ENCODE measurements at regions of chr1 and their contacts with region 1.

Region 1: DNA sequence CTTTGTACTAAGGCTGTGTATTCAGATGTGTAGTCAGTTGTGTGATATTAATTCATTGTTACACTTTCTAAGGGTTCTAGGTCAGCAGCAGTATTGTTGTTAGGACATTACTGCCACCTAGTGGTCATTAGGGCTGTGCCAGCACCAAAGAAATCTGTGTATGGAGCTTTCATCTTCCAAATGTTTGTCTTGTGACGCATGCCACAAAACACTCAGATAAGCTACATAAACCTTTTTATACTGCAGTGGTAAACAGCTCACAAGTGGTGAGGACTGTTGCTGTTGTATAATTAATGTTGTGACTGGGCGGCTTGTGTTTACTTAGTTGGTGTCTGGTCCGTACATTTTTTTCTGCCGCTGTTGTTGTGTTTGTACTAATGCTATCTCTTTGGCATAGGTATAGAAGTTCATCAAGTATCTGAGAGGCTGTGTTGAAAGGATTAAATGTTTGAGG is 51.7 kb downstream of the S1PR1 start:
- DNase-seq: peak; percentile 79
- ATAC-seq: peak; percentile 58
- H3K4me3 Mint-ChIP-seq: no peak overlapping the region
- H3K27ac Mint-ChIP-seq: no peak overlapping the region
- H3K4me1 Mint-ChIP-seq: peaks cover 76% of the 10 kb centered on the region
- H3K27me3 Mint-ChIP-seq: no peaks in the 10 kb centered on the region

Region 2: DNA sequence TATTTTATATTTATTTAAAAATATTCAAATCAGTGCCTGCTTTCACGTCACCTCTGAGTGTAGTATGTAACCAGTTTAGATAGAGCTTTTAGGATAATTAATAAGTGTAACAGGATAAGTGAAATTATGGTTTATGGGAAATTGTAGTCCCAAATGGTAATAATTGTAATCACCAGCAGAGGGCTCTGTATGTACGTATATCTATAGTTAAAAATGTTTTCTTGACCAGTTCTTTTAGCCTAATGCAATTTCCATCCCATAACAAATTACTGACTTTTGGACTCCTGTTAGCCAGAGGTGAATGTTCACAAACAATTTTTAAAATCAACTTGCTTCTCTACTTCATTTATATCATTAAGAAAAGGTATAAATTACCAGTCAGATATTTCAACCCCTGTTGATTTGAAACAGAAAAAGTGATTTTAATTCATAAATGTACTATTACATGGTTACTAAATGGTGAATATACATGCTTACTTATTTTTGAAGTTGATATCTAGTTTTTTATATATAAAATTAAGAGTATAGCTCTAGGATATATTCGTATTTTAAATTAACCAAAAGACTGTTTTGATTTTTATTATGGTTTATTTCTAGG is 367.3 kb before region 1 on chr1:
- CTCF ChIA-PET with region 1: interaction called, 52 read pairs
- POLR2A ChIA-PET with region 1: no interaction called
- DNase-seq: no peak
- ATAC-seq: no peak
- H3K4me3 Mint-ChIP-seq: no peak overlapping the region
- H3K27ac Mint-ChIP-seq: no peak overlapping the region
- H3K4me1 Mint-ChIP-seq: peaks cover 26% of the 10 kb centered on the region
- H3K27me3 Mint-ChIP-seq: no peaks in the 10 kb centered on the region

Region 3: GRCh38 chr1:100950781-100951180 is 337.7 kb before region 1 on chr1:
- CTCF ChIA-PET with region 1: interaction called, 12 read pairs
- POLR2A ChIA-PET with region 1: interaction called, 3 read pairs
- DNase-seq: no peak
- ATAC-seq: no peak
- H3K4me3 Mint-ChIP-seq: no peak overlapping the region
- H3K27ac Mint-ChIP-seq: peak overlapping the region; percentile 40
- H3K4me1 Mint-ChIP-seq: peaks cover 64% of the 10 kb centered on the region
- H3K27me3 Mint-ChIP-seq: no peaks in the 10 kb centered on the region

Region 4: DNA sequence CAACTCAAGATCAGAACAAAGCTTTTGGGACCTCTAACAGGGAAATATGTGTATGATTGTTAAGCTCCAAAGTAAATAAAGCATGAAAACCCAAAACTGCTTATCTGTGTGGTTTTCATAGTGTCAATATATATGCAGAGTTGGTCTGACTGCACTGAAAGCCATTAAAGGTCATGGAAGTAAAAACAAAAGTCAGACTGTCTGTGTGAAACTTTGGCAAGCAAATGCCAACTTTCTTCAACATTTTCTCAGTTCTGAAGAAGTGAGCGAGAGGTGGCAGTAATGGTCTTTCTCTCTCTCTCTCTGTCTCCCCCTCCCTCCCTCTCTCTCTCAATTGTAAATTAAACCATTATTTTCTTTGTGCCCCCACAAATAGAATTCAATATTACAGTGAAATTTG is 151.8 kb before region 1 on chr1:
- CTCF ChIA-PET with region 1: interaction called, 151 read pairs
- POLR2A ChIA-PET with region 1: no interaction called
- DNase-seq: peak; percentile 56
- ATAC-seq: peak; percentile 73
- H3K4me3 Mint-ChIP-seq: peak overlapping the region; percentile 42
- H3K27ac Mint-ChIP-seq: peak overlapping the region; percentile 83
- H3K4me1 Mint-ChIP-seq: peaks cover 67% of the 10 kb centered on the region
- H3K27me3 Mint-ChIP-seq: no peaks in the 10 kb centered on the region

Region 5: GRCh38 chr1:101257500-101258325 is 30.8 kb before region 1 on chr1:
- CTCF ChIA-PET with region 1: interaction called, 43 read pairs
- POLR2A ChIA-PET with region 1: interaction called, 6 read pairs
- DNase-seq: peak; percentile 74
- ATAC-seq: peak; percentile 80
- H3K4me3 Mint-ChIP-seq: peak overlapping the region; percentile 10
- H3K27ac Mint-ChIP-seq: peak overlapping the region; percentile 71
- H3K4me1 Mint-ChIP-seq: peaks cover 55% of the 10 kb centered on the region
- H3K27me3 Mint-ChIP-seq: no peaks in the 10 kb centered on the region

Region 6: DNA sequence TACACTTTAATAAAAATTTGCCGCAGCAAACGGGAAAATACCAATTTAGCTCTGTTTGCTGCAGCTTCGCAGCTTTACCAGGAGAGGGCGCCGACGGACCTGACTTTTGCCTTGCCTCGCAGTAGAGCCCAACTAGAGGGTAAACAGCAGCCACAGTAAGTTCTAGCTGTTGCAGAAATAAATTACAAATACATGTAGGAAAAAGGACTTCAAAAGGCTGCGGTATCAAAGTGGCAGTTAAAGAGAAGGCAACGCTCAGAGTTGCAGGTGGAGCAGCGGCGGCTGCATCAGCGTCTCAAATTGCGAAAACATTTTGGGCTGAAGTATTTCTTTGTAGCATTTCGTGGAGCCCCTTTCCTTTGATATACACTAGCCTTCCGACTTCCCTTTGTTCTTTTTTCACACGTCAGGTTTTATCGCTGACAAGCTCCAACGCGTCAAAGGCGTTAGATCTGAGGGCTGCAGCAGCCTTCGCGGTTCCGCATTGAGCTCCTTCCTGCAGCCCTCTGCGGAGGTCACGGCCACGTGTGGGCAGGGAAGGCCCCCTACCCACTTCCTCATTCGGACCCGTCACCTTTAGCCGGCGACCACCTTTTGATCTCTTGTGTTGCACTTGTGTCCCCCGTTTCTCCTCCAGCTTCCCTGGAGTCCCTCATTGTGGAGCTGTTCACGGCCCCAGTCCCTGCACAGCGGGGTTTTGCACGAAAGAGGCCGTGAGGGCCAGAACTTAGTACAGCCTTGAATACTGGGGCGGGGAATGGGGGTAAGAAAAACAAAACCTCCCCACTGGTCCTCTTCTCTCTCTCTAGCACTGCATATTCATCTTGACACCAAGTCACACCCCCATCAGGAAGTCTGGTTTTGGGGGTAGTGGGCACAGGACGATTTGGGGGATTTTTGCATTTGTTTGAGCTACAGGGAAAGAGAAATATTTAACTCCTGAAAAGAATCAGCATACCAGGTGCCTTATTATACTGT is 21.1 kb after region 1 on chr1:
- CTCF ChIA-PET with region 1: interaction called, 48 read pairs
- POLR2A ChIA-PET with region 1: interaction called, 5 read pairs
- DNase-seq: peak; percentile 81
- ATAC-seq: peak; percentile 81
- H3K4me3 Mint-ChIP-seq: peak overlapping the region; percentile 75
- H3K27ac Mint-ChIP-seq: peak overlapping the region; percentile 95
- H3K4me1 Mint-ChIP-seq: peaks cover 72% of the 10 kb centered on the region
- H3K27me3 Mint-ChIP-seq: no peaks in the 10 kb centered on the region

Region 7: DNA sequence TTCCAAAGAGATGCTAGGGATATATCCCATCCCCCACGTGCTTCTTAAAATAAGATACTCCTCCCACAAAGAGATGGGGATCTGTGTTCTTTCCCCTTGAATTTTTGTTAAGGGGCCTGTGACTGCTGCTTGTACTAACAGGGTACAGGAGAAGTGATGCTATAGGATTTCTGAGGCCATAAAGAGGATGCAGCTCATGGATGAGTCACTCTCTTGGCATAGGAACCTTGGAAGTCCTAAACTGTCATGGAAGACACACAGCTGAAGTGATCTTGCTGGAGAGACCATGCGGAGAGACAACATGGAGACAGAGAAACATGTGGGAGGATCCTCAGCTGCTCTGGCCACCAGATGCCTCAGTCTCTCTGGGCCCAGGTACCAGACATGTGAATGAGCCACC is 105.5 kb after region 1 on chr1:
- CTCF ChIA-PET with region 1: no interaction called
- POLR2A ChIA-PET with region 1: no interaction called
- DNase-seq: no peak
- ATAC-seq: no peak
- H3K4me3 Mint-ChIP-seq: no peak overlapping the region
- H3K27ac Mint-ChIP-seq: no peak overlapping the region
- H3K4me1 Mint-ChIP-seq: peaks cover 7% of the 10 kb centered on the region
- H3K27me3 Mint-ChIP-seq: peaks cover 9% of the 10 kb centered on the region

Region 8: GRCh38 chr1:101448018-101448417 is 159.5 kb after region 1 on chr1:
- CTCF ChIA-PET with region 1: no interaction called
- POLR2A ChIA-PET with region 1: no interaction called
- DNase-seq: no peak
- ATAC-seq: no peak
- H3K4me3 Mint-ChIP-seq: no peak overlapping the region
- H3K27ac Mint-ChIP-seq: no peak overlapping the region
- H3K4me1 Mint-ChIP-seq: peaks cover 19% of the 10 kb centered on the region
- H3K27me3 Mint-ChIP-seq: peaks cover 11% of the 10 kb centered on the region

Measured in activated CD8-positive, alpha-beta T cell treated with anti-CD3 and anti-CD28 coated beads, Interleukin-2, amount 10 ng/mL, durations not matched to agents 7 days and 5 days (primary cell).